Adrenal gland (tissue), 19 donors: ENCODE measurements at regions of chr18 and their contacts with region 1.

Region 1: GRCh38 chr18:35803551-35803950 is 168.9 kb upstream of the RMP24 start:
- DNase-seq: no peak
- H3K4me3 ChIP-seq: no peak overlapping the region
- H3K27ac ChIP-seq: no peak overlapping the region
- H3K4me1 ChIP-seq: no peaks in the 10 kb centered on the region
- H3K27me3 ChIP-seq: no peaks in the 10 kb centered on the region
- CTCF ChIP-seq: no peak
- POLR2A ChIP-seq: no peak

Region 2: GRCh38 chr18:35747894-35748472 is 55.6 kb before region 1 on chr18:
- intact Hi-C with region 1: loop called in 1 of 2 experiments (anchors 10 kb)
- DNase-seq: no peak
- H3K4me3 ChIP-seq: no peak overlapping the region
- H3K27ac ChIP-seq: no peak overlapping the region
- H3K4me1 ChIP-seq: no peaks in the 10 kb centered on the region
- H3K27me3 ChIP-seq: no peaks in the 10 kb centered on the region
- CTCF ChIP-seq: no peak
- POLR2A ChIP-seq: no peak